ENCODE measurements at regions of chr7 and their contacts with region 1.

Region 1: DNA sequence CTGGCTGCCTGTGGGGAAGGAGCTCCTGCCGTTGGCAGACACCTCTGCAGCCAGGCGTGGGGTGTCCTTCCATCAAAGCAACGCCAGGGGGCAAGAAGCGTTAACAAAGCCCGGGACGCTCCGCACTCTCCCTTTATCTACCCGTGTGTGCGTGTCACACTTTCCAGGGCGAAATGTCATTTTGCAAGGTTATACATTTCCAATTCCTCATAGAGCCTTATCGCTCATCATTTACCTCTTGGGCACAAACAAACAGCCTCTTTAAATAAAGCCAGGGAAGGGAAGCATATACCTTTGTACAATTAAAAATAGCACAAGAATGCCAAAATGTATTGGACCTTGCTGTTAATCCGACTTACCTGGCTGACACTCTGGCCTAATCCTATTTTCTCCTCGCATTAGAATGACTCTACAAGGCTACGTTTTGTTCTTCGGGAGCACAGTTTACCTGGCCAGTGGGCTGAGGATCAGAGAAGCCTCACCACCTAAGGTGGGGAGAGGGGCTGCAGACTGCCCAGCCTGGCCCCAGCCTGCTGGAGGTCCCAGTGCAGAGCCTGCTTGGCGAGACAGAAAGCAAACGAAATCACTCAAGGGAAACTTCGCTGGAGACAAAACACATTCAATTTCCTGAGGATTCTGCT is 77.6 kb upstream of the EN2 start:
- DNase-seq: peak; percentile 82
- H3K4me3 ChIP-seq: no peak overlapping the region
- H3K27ac ChIP-seq: no peak overlapping the region
- H3K4me1 ChIP-seq: peaks cover 9% of the 10 kb centered on the region
- H3K27me3 ChIP-seq: peaks cover 98% of the 10 kb centered on the region
- CTCF ChIP-seq: peak; percentile 67

Region 2: DNA sequence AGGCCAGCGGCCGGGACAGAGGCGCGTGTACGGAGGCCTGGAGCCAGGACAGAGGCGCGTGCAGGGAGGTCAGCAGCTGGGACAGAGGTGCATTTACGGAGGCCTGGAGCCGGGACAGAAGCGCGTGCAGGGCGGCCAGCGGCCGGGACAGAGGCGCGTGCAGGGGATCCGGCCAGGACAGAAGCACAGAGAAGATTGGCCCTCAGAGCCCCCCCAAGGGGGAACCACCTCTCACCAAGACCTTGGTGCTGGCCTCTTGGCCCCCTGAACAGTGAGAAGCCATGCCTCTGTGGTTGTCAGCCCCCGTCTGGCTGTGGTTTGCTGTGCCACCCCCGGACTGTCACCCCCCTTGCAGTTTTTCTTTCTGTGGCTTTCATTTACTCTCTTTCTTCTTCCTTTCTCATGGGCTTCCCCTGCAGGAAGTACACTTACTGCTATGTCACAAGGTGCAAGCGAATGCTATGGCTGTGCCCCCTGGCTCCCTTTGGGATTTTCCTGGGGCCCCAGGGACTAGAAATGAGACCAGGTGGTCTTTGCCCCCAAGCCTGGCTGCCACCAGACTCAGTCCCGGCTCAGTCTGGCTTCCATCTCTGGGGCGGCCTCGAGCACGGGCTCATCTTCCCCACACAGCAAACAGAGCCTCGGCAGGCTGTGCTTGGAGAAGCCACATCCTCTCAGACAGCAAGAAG is 41.6 kb before region 1 on chr7:
- CTCF ChIA-PET with region 1: no interaction called
- POLR2A ChIA-PET with region 1: no interaction called
- intact Hi-C with region 1: no loop called
- DNase-seq: no peak
- H3K4me3 ChIP-seq: no peak overlapping the region
- H3K27ac ChIP-seq: no peak overlapping the region
- H3K4me1 ChIP-seq: no peaks in the 10 kb centered on the region
- H3K27me3 ChIP-seq: peaks cover 28% of the 10 kb centered on the region
- CTCF ChIP-seq: no peak

Region 3: DNA sequence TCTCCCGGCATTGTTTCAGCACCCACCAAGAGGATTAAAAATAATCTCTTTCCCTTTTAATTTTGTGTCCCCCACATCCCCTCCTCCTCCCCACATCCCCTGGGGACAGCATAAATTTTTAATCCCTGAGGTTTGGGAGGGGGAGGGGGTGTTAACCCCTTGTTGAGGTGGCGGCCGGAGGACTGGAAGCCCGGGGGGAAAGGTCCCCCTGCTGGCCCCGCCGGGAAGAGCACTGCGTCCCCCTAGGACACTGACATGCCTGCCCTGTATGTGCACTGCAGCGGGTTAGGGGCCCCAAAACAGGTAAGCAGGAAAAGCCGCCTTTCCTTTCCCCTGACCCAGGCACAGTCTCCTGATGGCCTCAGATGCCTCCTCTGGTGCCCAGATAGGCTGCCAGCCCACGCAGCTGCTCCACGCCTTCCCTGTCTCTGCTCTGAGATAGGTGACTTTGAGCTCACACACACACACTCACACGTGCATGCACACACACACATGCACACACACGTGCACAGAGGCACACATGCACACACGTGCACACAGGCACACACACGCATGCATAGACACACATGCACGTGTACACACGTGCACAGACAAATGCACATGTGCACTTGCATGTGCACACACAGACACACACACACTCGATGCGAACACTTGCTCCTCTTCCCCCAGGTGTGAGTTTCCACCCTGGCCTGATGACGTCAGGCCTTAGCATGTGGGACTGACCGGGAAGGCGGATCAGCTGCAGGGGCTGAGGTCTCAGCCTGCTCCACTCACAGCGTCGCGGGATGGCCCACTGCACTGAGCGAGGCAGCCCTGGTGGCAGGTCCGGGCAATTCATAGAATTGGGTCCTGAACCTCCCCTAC is 153.7 kb after region 1 on chr7:
- CTCF ChIA-PET with region 1: no interaction called
- POLR2A ChIA-PET with region 1: no interaction called
- intact Hi-C with region 1: loop called (anchors 1 kb)
- DNase-seq: peak; percentile 63
- H3K4me3 ChIP-seq: peak overlapping the region; percentile 32
- H3K27ac ChIP-seq: no peak overlapping the region
- H3K4me1 ChIP-seq: peaks cover 14% of the 10 kb centered on the region
- H3K27me3 ChIP-seq: peaks cover 66% of the 10 kb centered on the region
- CTCF ChIP-seq: peak; percentile 67

Region 4: GRCh38 chr7:155769701-155770100 is 389.4 kb after region 1 on chr7:
- CTCF ChIA-PET with region 1: no interaction called
- POLR2A ChIA-PET with region 1: no interaction called
- intact Hi-C with region 1: loop called (anchors 5 kb)
- DNase-seq: no peak
- H3K4me3 ChIP-seq: no peak overlapping the region
- H3K27ac ChIP-seq: no peak overlapping the region
- H3K4me1 ChIP-seq: peaks cover 3% of the 10 kb centered on the region
- H3K27me3 ChIP-seq: no peaks in the 10 kb centered on the region
- CTCF ChIP-seq: no peak

Measured in A673 (cell line).